ENCODE measurements at regions of chr6 and their contacts with region 1.

Region 1: DNA sequence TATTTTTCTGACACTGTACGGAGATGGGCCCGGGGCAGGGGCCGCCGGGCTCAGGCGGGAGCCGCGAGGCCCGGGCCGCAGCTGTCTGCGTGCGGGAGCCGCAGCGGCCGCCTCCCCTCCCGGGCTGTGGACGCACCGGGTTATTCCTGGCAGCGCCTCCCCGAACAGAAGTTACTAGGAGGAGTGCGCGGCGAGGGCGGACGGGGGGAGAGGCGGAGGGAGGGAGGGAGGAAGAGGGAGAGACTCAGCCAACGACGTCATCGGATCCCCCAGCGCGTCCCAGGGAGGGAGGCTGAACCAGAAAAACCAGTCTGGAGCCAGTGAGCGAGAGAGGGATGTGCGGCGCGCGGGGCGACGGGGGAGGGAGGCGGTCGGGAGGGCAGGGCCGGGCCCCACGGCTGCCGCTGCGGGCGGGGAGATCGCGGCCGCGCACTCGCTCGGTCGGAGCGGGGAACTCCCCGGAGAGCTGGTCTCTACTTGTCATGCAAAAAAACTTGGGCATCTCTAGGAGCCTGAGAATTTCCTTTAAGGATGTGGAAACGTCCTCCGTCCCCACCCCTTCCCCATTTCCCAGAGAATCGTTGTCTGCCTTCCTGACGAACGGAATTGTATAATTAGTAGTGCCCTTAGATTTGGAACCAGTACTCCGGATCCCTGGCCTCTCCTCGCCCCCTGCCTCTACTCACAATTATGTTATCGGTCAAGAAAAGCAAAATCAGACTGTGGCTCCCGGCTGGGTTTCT is 1.4 kb upstream of the HIVEP2 start:
- DNase-seq: peak; percentile 98
- ATAC-seq: peak; percentile 75
- H3K4me3 ChIP-seq: peak overlapping the region; percentile 74
- H3K27ac ChIP-seq: peak overlapping the region; percentile 87
- H3K4me1 ChIP-seq: peaks cover 3% of the 10 kb centered on the region
- H3K27me3 ChIP-seq: no peaks in the 10 kb centered on the region
- CTCF ChIP-seq: no peak
- POLR2A ChIP-seq: peak; percentile 91
- RAD21 ChIP-seq: no peak; the same call in 1 of the 2 replicates

Region 2: DNA sequence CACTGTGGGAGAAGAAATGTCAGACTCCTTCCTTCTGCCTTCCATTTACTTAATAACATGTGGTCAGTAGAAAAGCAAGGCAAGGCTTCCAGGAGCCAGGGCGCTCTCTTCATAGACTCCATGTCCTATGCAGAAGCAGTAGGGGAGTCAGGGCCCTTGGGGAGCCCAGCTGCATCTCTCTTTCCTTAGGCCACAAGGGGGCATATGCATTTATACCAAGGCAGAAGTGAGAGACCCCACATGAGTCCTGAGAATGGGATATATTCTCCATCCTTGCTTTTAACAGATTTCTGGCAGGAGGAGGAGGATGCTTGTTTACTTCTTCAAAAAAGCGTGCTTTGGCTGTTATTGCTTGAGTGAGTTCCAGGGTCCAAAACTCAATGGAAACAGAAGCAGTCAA is 199.8 kb before region 1 on chr6:
- CTCF ChIA-PET with region 1: no interaction called
- POLR2A ChIA-PET with region 1: no interaction called
- dilution Hi-C with region 1: no loop called
- in situ Hi-C with region 1: no loop called
- intact Hi-C with region 1: loop called (anchors 5 kb)
- DNase-seq: peak; percentile 27
- ATAC-seq: 0 out of 2 replicates have a peak, but pooled peaks have one; percentile 35
- H3K4me3 ChIP-seq: no peak overlapping the region
- H3K27ac ChIP-seq: no peak overlapping the region
- H3K4me1 ChIP-seq: no peaks in the 10 kb centered on the region
- H3K27me3 ChIP-seq: no peaks in the 10 kb centered on the region
- CTCF ChIP-seq: peak; percentile 32
- POLR2A ChIP-seq: no peak
- RAD21 ChIP-seq: peak; percentile 38

Region 3: DNA sequence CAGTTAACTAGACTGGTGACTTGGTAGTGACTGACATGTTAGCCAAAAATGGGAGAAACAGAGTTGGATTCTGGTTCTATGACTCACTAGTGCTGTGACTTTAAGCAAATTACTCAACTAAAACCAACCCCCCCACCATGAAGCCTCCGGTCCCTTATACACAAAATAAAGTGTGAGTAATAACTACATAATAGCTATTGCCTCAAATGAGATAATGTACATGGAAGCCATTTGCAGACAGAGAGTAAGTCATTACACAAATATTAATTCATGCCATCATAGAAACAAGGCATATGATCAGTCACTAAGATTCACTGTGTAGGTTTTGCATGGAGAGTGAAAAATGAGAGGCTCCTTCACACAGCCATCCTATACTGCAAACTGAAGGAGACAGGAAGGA is 113.3 kb before region 1 on chr6:
- CTCF ChIA-PET with region 1: no interaction called
- POLR2A ChIA-PET with region 1: no interaction called
- dilution Hi-C with region 1: no loop called
- in situ Hi-C with region 1: no loop called
- intact Hi-C with region 1: loop called (anchors 5 kb)
- DNase-seq: peak; percentile 98
- ATAC-seq: peak; percentile 95
- H3K4me3 ChIP-seq: no peak overlapping the region
- H3K27ac ChIP-seq: no peak overlapping the region
- H3K4me1 ChIP-seq: peaks cover 5% of the 10 kb centered on the region; the same call in 1 of the 2 replicates
- H3K27me3 ChIP-seq: no peaks in the 10 kb centered on the region
- CTCF ChIP-seq: no peak
- POLR2A ChIP-seq: peak; percentile 46; the same call in 1 of the 2 replicates
- RAD21 ChIP-seq: no peak; the same call in 1 of the 2 replicates

Region 4: GRCh38 chr6:142885182-142885867 is 61.0 kb before region 1 on chr6:
- CTCF ChIA-PET with region 1: no interaction called
- POLR2A ChIA-PET with region 1: no interaction called
- dilution Hi-C with region 1: no loop called
- in situ Hi-C with region 1: no loop called
- intact Hi-C with region 1: loop called (anchors 1 kb)
- DNase-seq: peak; percentile 99
- ATAC-seq: peak; percentile 86
- H3K4me3 ChIP-seq: peak overlapping the region; percentile 39
- H3K27ac ChIP-seq: peak overlapping the region; percentile 78
- H3K4me1 ChIP-seq: peaks cover 9% of the 10 kb centered on the region
- H3K27me3 ChIP-seq: no peaks in the 10 kb centered on the region
- CTCF ChIP-seq: no peak
- POLR2A ChIP-seq: peak; percentile 41; the same call in 1 of the 2 replicates
- RAD21 ChIP-seq: peak; percentile 25; the same call in 1 of the 2 replicates

Region 5: GRCh38 chr6:143049611-143050010 is 103.3 kb after region 1 on chr6:
- CTCF ChIA-PET with region 1: no interaction called
- POLR2A ChIA-PET with region 1: no interaction called
- dilution Hi-C with region 1: no loop called
- in situ Hi-C with region 1: no loop called
- intact Hi-C with region 1: no loop called
- DNase-seq: no peak
- ATAC-seq: no peak
- H3K4me3 ChIP-seq: no peak overlapping the region
- H3K27ac ChIP-seq: no peak overlapping the region
- H3K4me1 ChIP-seq: no peaks in the 10 kb centered on the region
- H3K27me3 ChIP-seq: no peaks in the 10 kb centered on the region; the same call in 1 of the 2 replicates
- CTCF ChIP-seq: no peak
- POLR2A ChIP-seq: no peak
- RAD21 ChIP-seq: no peak

Region 6: DNA sequence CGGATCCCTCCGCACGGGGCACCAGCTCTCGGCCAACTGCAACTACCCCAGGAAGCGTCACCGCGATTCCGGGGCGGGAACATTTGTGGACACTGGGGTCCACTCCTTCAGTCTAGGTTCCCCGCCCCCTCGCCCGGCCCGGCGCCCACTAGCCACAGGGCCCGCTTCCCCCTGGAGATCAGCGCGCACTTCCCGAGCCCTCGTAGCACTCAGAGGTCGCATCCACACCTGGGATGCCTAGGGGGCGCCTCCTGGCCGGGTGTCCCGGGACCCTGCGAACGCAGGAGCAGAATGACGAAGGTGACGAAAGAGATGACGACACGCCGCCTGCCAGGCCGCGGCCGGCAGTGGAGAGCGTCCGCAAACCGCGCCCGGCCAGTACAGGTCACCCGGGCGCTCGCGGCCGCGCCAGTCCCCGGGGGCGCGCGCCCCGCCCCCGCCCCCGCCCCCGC is 114.0 kb after region 1 on chr6:
- CTCF ChIA-PET with region 1: no interaction called
- POLR2A ChIA-PET with region 1: no interaction called
- dilution Hi-C with region 1: no loop called
- in situ Hi-C with region 1: no loop called
- intact Hi-C with region 1: loop called (anchors 2 kb)
- DNase-seq: peak; percentile 81
- ATAC-seq: peak; percentile 90
- H3K4me3 ChIP-seq: peak overlapping the region; percentile 97
- H3K27ac ChIP-seq: peak overlapping the region; percentile 86
- H3K4me1 ChIP-seq: peaks cover 7% of the 10 kb centered on the region
- H3K27me3 ChIP-seq: no peaks in the 10 kb centered on the region
- CTCF ChIP-seq: no peak
- POLR2A ChIP-seq: peak; percentile 42; the same call in 1 of the 2 replicates
- RAD21 ChIP-seq: no peak

Region 7: DNA sequence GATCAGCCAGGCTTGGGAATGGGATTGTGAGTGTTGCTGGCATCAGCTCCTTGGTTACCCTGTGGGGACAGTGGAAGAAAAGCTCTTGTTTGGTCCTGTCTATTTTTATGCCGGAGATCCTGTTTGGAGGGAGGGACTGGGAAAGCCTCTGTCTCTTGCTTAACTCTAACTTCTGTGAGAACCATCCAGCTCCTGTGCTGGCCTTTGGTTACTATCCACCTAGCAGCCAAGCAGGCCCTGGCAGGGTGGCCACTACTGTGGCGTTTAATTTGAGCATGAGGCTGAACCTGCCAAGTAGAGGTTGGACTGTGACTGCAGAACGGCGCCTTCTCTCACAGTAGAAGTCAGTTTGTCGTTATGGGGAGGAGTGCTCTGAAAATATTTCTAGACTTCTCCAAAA is 1532.1 kb after region 1 on chr6:
- CTCF ChIA-PET with region 1: no interaction called
- POLR2A ChIA-PET with region 1: no interaction called
- dilution Hi-C with region 1: no loop called
- in situ Hi-C with region 1: no loop called
- intact Hi-C with region 1: no loop called
- DNase-seq: no peak
- ATAC-seq: no peak
- H3K4me3 ChIP-seq: no peak overlapping the region
- H3K27ac ChIP-seq: no peak overlapping the region
- H3K4me1 ChIP-seq: no peaks in the 10 kb centered on the region
- H3K27me3 ChIP-seq: no peaks in the 10 kb centered on the region
- CTCF ChIP-seq: no peak
- POLR2A ChIP-seq: no peak
- RAD21 ChIP-seq: no peak

Measured in IMR-90 (cell line).